Activated T-helper 2 cell treated with anti-CD3 and anti-CD28 coated beads, Interferon-gamma antibody, Interleukin-2, Interleukin-4, amounts not matched to agents 10 μg/mL and 5 μg/mL and 100 μg/mL, durations not matched to agents 14 hours and 24 hours and 36 hours (primary cell): ENCODE measurements at regions of chr13 and their contacts with region 1.

Region 1: GRCh38 chr13:24097064-24097463 is 63.5 kb upstream of the SPATA13 start:
- DNase-seq: no peak
- H3K4me3 Mint-ChIP-seq: peak overlapping the region; percentile 55
- H3K27ac Mint-ChIP-seq: peak overlapping the region; percentile 80
- H3K4me1 Mint-ChIP-seq: peaks cover 16% of the 10 kb centered on the region
- H3K27me3 Mint-ChIP-seq: peaks cover 27% of the 10 kb centered on the region

Region 2: GRCh38 chr13:24053519-24054251 is 43.4 kb before region 1 on chr13:
- intact Hi-C with region 1: loop called (anchors 2 kb)
- DNase-seq: peak; percentile 49
- H3K4me3 Mint-ChIP-seq: no peak overlapping the region
- H3K27ac Mint-ChIP-seq: no peak overlapping the region
- H3K4me1 Mint-ChIP-seq: peaks cover 17% of the 10 kb centered on the region
- H3K27me3 Mint-ChIP-seq: peaks cover 15% of the 10 kb centered on the region

Region 3: GRCh38 chr13:24160454-24161009 is 63.5 kb after region 1 on chr13 and contains the start of gene SPATA13:
- intact Hi-C with region 1: loop called (anchors 1 kb)
- DNase-seq: peak; percentile 88
- H3K4me3 Mint-ChIP-seq: peak within 1 kb of the TSS; percentile 90
- H3K27ac Mint-ChIP-seq: peak within 1 kb of the TSS; percentile 50
- H3K4me1 Mint-ChIP-seq: peaks cover 22% of the 10 kb centered on the region
- H3K27me3 Mint-ChIP-seq: peaks cover 17% of the 10 kb centered on the region
- total RNA-seq, gene SPATA13: 41.5 and 44.9 TPM in 2 replicates

Region 4: GRCh38 chr13:24178847-24179485 is 81.9 kb after region 1 on chr13:
- intact Hi-C with region 1: loop called (anchors 2 kb)
- DNase-seq: no peak
- H3K4me3 Mint-ChIP-seq: no peak overlapping the region
- H3K27ac Mint-ChIP-seq: peak overlapping the region; percentile 28
- H3K4me1 Mint-ChIP-seq: peaks cover 35% of the 10 kb centered on the region
- H3K27me3 Mint-ChIP-seq: no peaks in the 10 kb centered on the region

Region 5: DNA sequence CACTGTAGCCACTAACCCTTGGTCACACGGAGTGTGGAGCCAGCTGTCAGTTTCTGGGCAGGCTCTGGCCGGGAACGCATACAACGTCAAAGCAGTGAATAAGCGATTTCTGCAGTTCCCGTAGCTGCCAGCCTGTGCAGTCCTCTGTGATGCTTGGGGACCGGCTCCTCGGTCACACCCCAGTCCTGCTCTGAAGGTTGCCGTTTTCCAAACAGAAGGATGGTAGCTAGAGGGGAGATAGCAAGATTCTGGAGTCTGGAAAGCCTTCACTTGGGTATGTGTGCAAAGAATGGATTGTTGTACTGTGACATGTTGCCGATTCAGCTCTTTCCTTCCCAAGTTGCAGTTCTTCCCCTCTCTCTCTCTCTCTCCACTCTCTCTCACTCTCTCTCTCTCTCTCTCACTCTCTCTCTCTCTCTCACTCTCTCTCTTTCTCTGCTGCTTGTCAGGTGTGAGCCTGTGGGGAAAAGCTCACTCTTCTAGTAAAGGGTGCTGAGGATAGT is 173.6 kb after region 1 on chr13:
- intact Hi-C with region 1: loop called (anchors 1 kb)
- DNase-seq: peak; percentile 61
- H3K4me3 Mint-ChIP-seq: peak overlapping the region; percentile 97
- H3K27ac Mint-ChIP-seq: peak overlapping the region; percentile 95
- H3K4me1 Mint-ChIP-seq: peaks cover 81% of the 10 kb centered on the region
- H3K27me3 Mint-ChIP-seq: no peaks in the 10 kb centered on the region

Region 6: GRCh38 chr13:24288870-24289269 is 191.8 kb after region 1 on chr13:
- intact Hi-C with region 1: no loop called
- DNase-seq: no peak
- H3K4me3 Mint-ChIP-seq: no peak overlapping the region
- H3K27ac Mint-ChIP-seq: no peak overlapping the region
- H3K4me1 Mint-ChIP-seq: no peaks in the 10 kb centered on the region
- H3K27me3 Mint-ChIP-seq: no peaks in the 10 kb centered on the region